ENCODE measurements at regions of chr1 and their contacts with region 1.

Region 1: GRCh38 chr1:77978969-77979876 is at the start of gene FUBP1:
- DNase-seq: peak; percentile 84
- H3K4me3 ChIP-seq: peak within 1 kb of the TSS; percentile 44 to 86 (median 74)
- H3K27ac ChIP-seq: peak within 1 kb of the TSS; percentile 93 to 99 (median 98)
- H3K4me1 ChIP-seq: peaks cover 11 to 61% (median 32%) of the 10 kb centered on the region in 3 donors
- H3K27me3 ChIP-seq: no peaks in the 10 kb centered on the region
- CTCF ChIP-seq: peak; percentile 61 to 81 (median 71)
- POLR2A ChIP-seq: peak in 2 of 4 donors; percentile 19 to 69
- total RNA-seq, gene FUBP1: 44.6 to 103 (median 77.8) TPM

Region 2: GRCh38 chr1:78114034-78114956 is 135.1 kb after region 1 on chr1:
- intact Hi-C with region 1: loop called (anchors 10 kb)
- DNase-seq: no peak
- H3K4me3 ChIP-seq: no peak overlapping the region
- H3K27ac ChIP-seq: peak overlapping the region; percentile 42 to 72 (median 46)
- H3K4me1 ChIP-seq: peaks cover 0 to 15% (median 4%) of the 10 kb centered on the region in 3 donors
- H3K27me3 ChIP-seq: no peaks in the 10 kb centered on the region
- CTCF ChIP-seq: peak; percentile 79 to 91 (median 88)
- POLR2A ChIP-seq: no peak

Region 3: DNA sequence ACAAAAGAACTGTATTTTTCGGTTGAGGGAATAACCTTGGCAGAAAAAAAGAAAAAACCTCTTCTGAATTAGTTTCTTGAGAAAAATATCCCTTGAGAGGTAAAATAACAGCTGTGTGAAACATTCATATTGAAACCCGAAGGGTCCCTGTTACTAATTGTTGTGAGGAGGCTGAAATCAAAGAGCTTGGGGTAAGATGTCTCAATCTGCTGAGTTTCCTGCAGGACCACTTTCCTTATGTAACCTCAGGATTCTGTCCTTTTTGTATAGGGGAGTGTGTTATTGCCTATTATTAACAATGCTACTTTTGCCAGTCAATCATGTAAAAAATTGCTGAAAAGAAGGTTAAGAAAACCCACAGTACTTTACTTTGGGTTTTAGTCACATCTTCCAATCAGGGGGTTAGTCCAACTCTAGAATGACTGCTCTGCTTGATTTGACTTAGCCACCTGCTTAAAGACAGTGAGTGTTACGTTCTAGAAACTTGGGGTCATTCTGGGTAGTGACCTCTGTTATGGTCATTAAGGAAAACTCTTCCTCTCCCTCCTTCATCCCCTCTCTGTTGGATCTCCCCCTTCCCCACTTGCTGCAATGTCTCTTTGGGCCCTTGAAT is 205.3 kb after region 1 on chr1:
- intact Hi-C with region 1: no loop called
- DNase-seq: no peak
- H3K4me3 ChIP-seq: no peak overlapping the region
- H3K27ac ChIP-seq: no peak overlapping the region
- H3K4me1 ChIP-seq: no peaks in the 10 kb centered on the region
- H3K27me3 ChIP-seq: peaks cover 0 to 61% (median 0%) of the 10 kb centered on the region in 4 donors
- CTCF ChIP-seq: no peak
- POLR2A ChIP-seq: no peak

Measured in esophagus squamous epithelium (tissue), 5 donors.